GM12878 (cell line): ENCODE measurements at regions of chr1 and their contacts with region 1.

Region 1: GRCh38 chr1:206930210-206930798 is 8.6 kb upstream of the FCMR start:
- DNase-seq: peak; percentile 96
- ATAC-seq: peak; percentile 86
- H3K4me3 ChIP-seq: peak overlapping the region; percentile 64
- H3K27ac ChIP-seq: peak overlapping the region; percentile 99
- H3K4me1 ChIP-seq: peaks cover 49% of the 10 kb centered on the region
- H3K27me3 ChIP-seq: no peaks in the 10 kb centered on the region
- CTCF ChIP-seq: no peak
- EP300 ChIP-seq: peak; percentile 93 to 94
- POLR2A ChIP-seq: peak; percentile 84
- RAD21 ChIP-seq: peak; percentile 12; the same call in 1 of the 2 replicates

Region 2: DNA sequence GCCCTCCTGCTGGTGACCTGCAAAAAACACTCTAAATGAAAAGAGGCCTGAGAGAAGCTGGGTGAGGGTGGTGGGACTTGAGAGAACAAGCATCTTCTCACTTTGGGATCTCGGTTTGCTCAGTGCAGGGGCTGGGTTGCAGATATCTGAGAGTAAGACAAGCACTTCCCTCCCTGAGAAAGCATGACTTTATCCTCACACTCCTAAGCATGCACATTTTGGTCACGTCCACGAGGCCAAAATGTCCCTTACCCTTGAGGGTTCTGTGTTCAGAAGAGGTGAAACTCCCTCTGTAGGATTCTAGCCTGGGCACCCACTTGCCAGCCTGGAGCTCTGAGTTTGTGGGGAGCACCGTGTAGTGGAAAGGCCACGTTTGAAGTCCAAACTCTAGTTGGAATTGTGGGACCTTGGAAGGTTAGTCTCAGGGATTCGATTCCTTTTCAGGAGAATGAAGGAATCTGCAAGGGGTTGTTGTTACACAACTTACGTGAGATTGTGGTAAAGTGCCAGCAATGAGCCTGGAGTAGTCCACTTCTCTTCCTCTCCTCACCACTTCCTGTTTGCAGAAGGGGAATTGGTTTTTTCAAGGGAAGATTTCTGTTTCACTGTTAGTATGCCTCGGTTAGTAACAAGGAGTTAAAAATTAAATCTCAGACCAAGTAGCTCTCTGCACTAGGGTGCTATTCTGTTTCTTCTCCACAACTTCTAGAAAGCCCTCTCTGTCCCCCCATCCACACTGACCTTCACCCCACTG is 37.0 kb after region 1 on chr1:
- CTCF ChIA-PET with region 1: interaction called, 124 read pairs
- POLR2A ChIA-PET with region 1: interaction called, 12 read pairs
- RAD21 ChIA-PET with region 1: interaction called, 18 read pairs
- SMC1A ChIA-PET with region 1: interaction called, 43 read pairs
- in situ Hi-C with region 1: no loop called
- intact Hi-C with region 1: loop called (anchors 2 kb)
- DNase-seq: peak; percentile 72
- ATAC-seq: peak; percentile 72
- H3K4me3 ChIP-seq: 0 out of 2 replicates have a peak overlapping the region, but pooled peaks have one; percentile 37
- H3K27ac ChIP-seq: peak overlapping the region; percentile 52
- H3K4me1 ChIP-seq: peaks cover 38% of the 10 kb centered on the region
- H3K27me3 ChIP-seq: no peaks in the 10 kb centered on the region
- CTCF ChIP-seq: no peak
- EP300 ChIP-seq: 0 out of 4 replicates have a peak, but pooled peaks of 1 of the 2 experiments have one; percentile 32
- POLR2A ChIP-seq: no peak
- RAD21 ChIP-seq: no peak

Region 3: GRCh38 chr1:207134581-207134980 is 204.3 kb after region 1 on chr1:
- CTCF ChIA-PET with region 1: no interaction called
- POLR2A ChIA-PET with region 1: no interaction called
- RAD21 ChIA-PET with region 1: no interaction called
- SMC1A ChIA-PET with region 1: no interaction called
- in situ Hi-C with region 1: no loop called
- intact Hi-C with region 1: no loop called
- DNase-seq: no peak
- ATAC-seq: no peak
- H3K4me3 ChIP-seq: no peak overlapping the region
- H3K27ac ChIP-seq: no peak overlapping the region
- H3K4me1 ChIP-seq: no peaks in the 10 kb centered on the region
- H3K27me3 ChIP-seq: no peaks in the 10 kb centered on the region; a peak in 2 of 4 replicates
- CTCF ChIP-seq: no peak
- EP300 ChIP-seq: no peak
- POLR2A ChIP-seq: no peak
- RAD21 ChIP-seq: no peak